ENCODE measurements at regions of chr11 and their contacts with region 1.

Region 1: GRCh38 chr11:71251761-71252443 is 475 bp downstream of the SHANK2 start:
- DNase-seq: peak in 1 of 2 donors; percentile 53
- H3K4me3 ChIP-seq: peak overlapping the region; percentile 50 to 63
- H3K27ac ChIP-seq: no peak overlapping the region
- H3K4me1 ChIP-seq: peaks cover 14% of the 10 kb centered on the region in 2 donors
- H3K27me3 ChIP-seq: peaks cover 12% of the 10 kb centered on the region
- CTCF ChIP-seq: no peak

Region 2: GRCh38 chr11:71298761-71299181 is 46.9 kb after region 1 on chr11:
- intact Hi-C with region 1: loop called (anchors 5 kb)
- DNase-seq: peak in 1 of 2 donors; percentile 52
- H3K4me3 ChIP-seq: no peak overlapping the region
- H3K27ac ChIP-seq: peak overlapping the region in 1 of 2 donors; percentile 39
- H3K4me1 ChIP-seq: peaks cover 5 to 15% of the 10 kb centered on the region in 2 donors
- H3K27me3 ChIP-seq: no peaks in the 10 kb centered on the region
- CTCF ChIP-seq: no peak

Measured in ascending aorta (tissue), 2 donors.